ENCODE measurements at regions of chr7 and their contacts with region 1.

Region 1: GRCh38 chr7:101058355-101058754 is 26.9 kb upstream of the TRIM56 start:
- DNase-seq: peak; percentile 45 to 77 (median 64)
- ATAC-seq: peak; percentile 68 to 81 (median 74)
- H3K4me3 ChIP-seq: no peak overlapping the region
- H3K27ac ChIP-seq: no peak overlapping the region
- H3K4me1 ChIP-seq: no peaks in the 10 kb centered on the region
- H3K27me3 ChIP-seq: peaks cover 0 to 65% (median 12%) of the 10 kb centered on the region in 9 donors
- CTCF ChIP-seq: no peak
- POLR2A ChIP-seq: no peak

Region 2: DNA sequence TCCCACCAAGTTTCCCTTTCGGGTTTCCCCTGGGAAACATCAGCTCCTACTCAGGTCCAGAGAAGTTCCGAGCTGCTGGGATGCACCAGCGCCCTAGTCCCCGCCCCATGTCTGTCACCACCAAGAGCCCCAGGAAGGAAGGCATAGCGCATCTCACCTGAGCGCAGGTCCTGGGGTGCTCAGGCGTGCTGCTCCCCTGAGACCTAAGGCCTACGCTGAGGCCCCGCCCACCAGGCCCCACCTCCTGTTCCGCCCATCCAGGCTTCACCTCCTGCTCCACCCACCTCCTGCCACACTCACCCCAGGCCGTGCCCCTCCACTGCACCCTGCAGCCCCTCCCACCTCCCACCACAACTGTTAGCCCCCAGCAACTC is 415.8 kb before region 1 on chr7:
- intact Hi-C with region 1: loop called in 1 of 10 experiments (anchors 5 kb)
- DNase-seq: no peak
- ATAC-seq: no peak
- H3K4me3 ChIP-seq: no peak overlapping the region
- H3K27ac ChIP-seq: no peak overlapping the region
- H3K4me1 ChIP-seq: no peaks in the 10 kb centered on the region
- H3K27me3 ChIP-seq: peaks cover 0 to 49% (median 14%) of the 10 kb centered on the region in 9 donors
- CTCF ChIP-seq: no peak
- POLR2A ChIP-seq: no peak

Region 3: GRCh38 chr7:100705753-100706671 is 352.3 kb before region 1 on chr7 and contains the start of gene POP7:
- intact Hi-C with region 1: loop called in 1 of 10 experiments (anchors 10 kb)
- DNase-seq: peak; percentile 99 to 100 (median 99)
- ATAC-seq: peak; percentile 96 to 99 (median 98)
- H3K4me3 ChIP-seq: peak within 1 kb of the TSS; percentile 53 to 88 (median 77)
- H3K27ac ChIP-seq: peak within 1 kb of the TSS; percentile 91 to 99 (median 94)
- H3K4me1 ChIP-seq: peaks cover 0 to 28% (median 18%) of the 10 kb centered on the region in 12 donors
- H3K27me3 ChIP-seq: no peaks in the 10 kb centered on the region
- CTCF ChIP-seq: no peak
- POLR2A ChIP-seq: peak in 1 of 2 donors; percentile 71
- total RNA-seq, gene POP7: 24.1 to 41.3 (median 28.9) TPM

Region 4: GRCh38 chr7:100803398-100804233 is 254.7 kb before region 1 on chr7:
- intact Hi-C with region 1: loop called in 3 of 10 experiments (anchors 10 kb)
- DNase-seq: peak; percentile 70 to 90 (median 82)
- ATAC-seq: peak; percentile 77 to 92 (median 88)
- H3K4me3 ChIP-seq: peak overlapping the region in 6 of 12 donors; percentile 1 to 41 (median 6)
- H3K27ac ChIP-seq: peak overlapping the region; percentile 3 to 73 (median 44)
- H3K4me1 ChIP-seq: peaks cover 5 to 56% (median 25%) of the 10 kb centered on the region in 12 donors
- H3K27me3 ChIP-seq: no peaks in the 10 kb centered on the region
- CTCF ChIP-seq: no peak
- POLR2A ChIP-seq: no peak

Region 5: GRCh38 chr7:100896732-100897608 is 161.4 kb before region 1 on chr7:
- intact Hi-C with region 1: loop called (anchors 1 to 5 kb)
- DNase-seq: peak in 3 of 5 donors; percentile 56 to 75 (median 64)
- ATAC-seq: peak; percentile 25 to 54 (median 38)
- H3K4me3 ChIP-seq: peak overlapping the region in 11 of 12 donors; percentile 11 to 61 (median 54)
- H3K27ac ChIP-seq: peak overlapping the region in 2 of 12 donors; percentile 47 to 52
- H3K4me1 ChIP-seq: peaks cover 2 to 31% (median 16%) of the 10 kb centered on the region in 12 donors
- H3K27me3 ChIP-seq: peaks cover 21 to 76% (median 43%) of the 10 kb centered on the region in 9 donors
- CTCF ChIP-seq: peak; percentile 54 to 85 (median 76)
- POLR2A ChIP-seq: no peak

Region 6: GRCh38 chr7:100949227-100949932 is 109.0 kb before region 1 on chr7 and contains the start of gene MUC3A:
- intact Hi-C with region 1: no loop called
- DNase-seq: peak in 4 of 5 donors; percentile 37 to 52 (median 46)
- ATAC-seq: peak in 2 of 4 donors; percentile 62 to 63
- H3K4me3 ChIP-seq: peak within 1 kb of the TSS in 10 of 12 donors; percentile 8 to 43 (median 28)
- H3K27ac ChIP-seq: peak within 1 kb of the TSS in 6 of 12 donors; percentile 37 to 74 (median 54)
- H3K4me1 ChIP-seq: no peaks in the 10 kb centered on the region
- H3K27me3 ChIP-seq: peaks cover 0 to 59% (median 23%) of the 10 kb centered on the region in 9 donors
- CTCF ChIP-seq: no peak
- POLR2A ChIP-seq: no peak
- total RNA-seq, gene MUC3A: 0.16 to 1.4 (median 0.45) TPM

Region 7: DNA sequence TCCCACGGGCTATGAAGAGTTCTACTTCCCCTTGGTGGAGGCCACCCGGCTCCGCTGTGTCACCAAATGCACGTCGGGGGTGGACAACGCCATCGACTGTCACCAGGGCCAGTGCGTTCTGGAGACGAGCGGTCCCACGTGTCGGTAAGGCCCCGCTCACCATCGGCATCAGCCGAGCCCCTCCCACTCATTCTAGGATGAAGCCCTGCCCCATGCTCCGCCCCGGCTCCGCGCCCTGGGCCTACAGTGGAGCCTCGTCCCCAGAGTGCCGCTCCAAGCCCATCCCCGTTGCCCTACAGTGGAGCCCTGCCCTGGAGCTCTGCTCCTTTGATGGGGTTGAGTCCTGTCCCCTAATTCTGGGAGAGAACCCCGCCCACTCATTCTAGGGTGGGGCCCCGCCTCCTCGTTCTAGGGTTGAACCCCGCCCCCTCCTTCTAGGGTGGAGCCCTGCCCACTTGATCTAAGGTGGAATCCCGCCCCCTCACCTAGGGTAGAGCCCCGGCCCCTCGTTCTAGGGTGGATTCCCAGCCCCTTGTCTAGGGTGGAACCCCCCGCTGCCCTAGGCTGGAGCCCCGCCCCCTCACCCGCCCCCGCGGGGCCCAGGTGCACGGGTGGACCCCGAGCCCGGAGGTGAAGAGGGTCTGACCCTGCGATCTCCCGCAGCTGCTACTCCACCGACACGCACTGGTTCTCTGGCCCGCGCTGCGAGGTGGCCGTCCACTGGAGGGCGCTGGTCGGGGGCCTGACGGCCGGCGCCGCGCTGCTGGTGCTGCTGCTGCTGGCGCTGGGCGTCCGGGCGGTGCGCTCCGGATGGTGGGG is 92.4 kb before region 1 on chr7:
- intact Hi-C with region 1: loop called in 8 of 10 experiments (anchors 1 to 10 kb)
- DNase-seq: peak; percentile 49 to 84 (median 56)
- ATAC-seq: peak in 3 of 4 donors; percentile 40 to 73 (median 55)
- H3K4me3 ChIP-seq: peak overlapping the region in 10 of 12 donors; percentile 5 to 37 (median 15)
- H3K27ac ChIP-seq: no peak overlapping the region
- H3K4me1 ChIP-seq: peaks cover 0 to 16% (median 8%) of the 10 kb centered on the region in 12 donors
- H3K27me3 ChIP-seq: peaks cover 43 to 80% (median 58%) of the 10 kb centered on the region in 9 donors
- CTCF ChIP-seq: peak; percentile 48 to 79 (median 57)
- POLR2A ChIP-seq: no peak